Natural killer cell (primary cell): ENCODE measurements at regions of chr1 and their contacts with region 1.

Region 1: GRCh38 chr1:246002725-246003441 is 504.2 kb downstream of the SMYD3 start:
- DNase-seq: peak; percentile 78 to 90
- ATAC-seq: peak; percentile 80 to 85 (median 85)
- H3K4me3 ChIP-seq: no peak overlapping the region
- H3K4me3 Mint-ChIP-seq: no peak overlapping the region
- H3K27ac ChIP-seq: no peak overlapping the region
- H3K27ac Mint-ChIP-seq: peak overlapping the region in 1 of 2 donors; percentile 56
- H3K4me1 ChIP-seq: no peaks in the 10 kb centered on the region
- H3K4me1 Mint-ChIP-seq: peaks cover 0 to 7% of the 10 kb centered on the region in 2 donors
- H3K27me3 ChIP-seq: no peaks in the 10 kb centered on the region
- H3K27me3 Mint-ChIP-seq: no peaks in the 10 kb centered on the region
- CTCF ChIP-seq: peak; percentile 94

Region 2: GRCh38 chr1:245363461-245364200 is 639.3 kb before region 1 on chr1:
- intact Hi-C with region 1: loop called (anchors 5 kb)
- DNase-seq: peak; percentile 14 to 18
- ATAC-seq: peak; percentile 78 to 97 (median 89)
- H3K4me3 ChIP-seq: no peak overlapping the region
- H3K4me3 Mint-ChIP-seq: peak overlapping the region; percentile 71
- H3K27ac ChIP-seq: no peak overlapping the region
- H3K27ac Mint-ChIP-seq: peak overlapping the region; percentile 61 to 83
- H3K4me1 ChIP-seq: peaks cover 21% of the 10 kb centered on the region
- H3K4me1 Mint-ChIP-seq: peaks cover 14 to 19% of the 10 kb centered on the region in 2 donors
- H3K27me3 ChIP-seq: no peaks in the 10 kb centered on the region
- H3K27me3 Mint-ChIP-seq: no peaks in the 10 kb centered on the region
- CTCF ChIP-seq: no peak

Region 3: DNA sequence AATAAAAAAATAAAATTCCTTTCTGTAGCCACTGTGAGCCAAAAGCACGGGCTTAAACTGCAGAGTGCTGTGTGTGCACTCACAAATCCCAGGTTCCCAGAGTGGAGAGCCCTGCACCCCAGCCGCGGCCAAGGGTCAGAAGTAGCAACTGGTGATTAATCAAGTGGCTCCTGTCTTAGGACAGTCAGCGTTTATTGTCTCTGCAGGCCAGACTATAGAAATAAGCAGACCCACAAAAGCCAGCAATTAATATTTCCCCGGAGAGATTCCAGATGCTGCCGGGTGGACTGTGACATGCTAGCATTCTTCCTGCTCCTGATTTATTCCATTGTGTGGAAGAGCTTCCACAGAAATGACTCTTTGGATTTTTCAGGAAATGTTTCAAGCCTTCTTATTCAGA is 435.9 kb before region 1 on chr1:
- intact Hi-C with region 1: loop called (anchors 2 kb)
- DNase-seq: no peak
- ATAC-seq: no peak
- H3K4me3 ChIP-seq: no peak overlapping the region
- H3K4me3 Mint-ChIP-seq: no peak overlapping the region
- H3K27ac ChIP-seq: no peak overlapping the region
- H3K27ac Mint-ChIP-seq: no peak overlapping the region
- H3K4me1 ChIP-seq: no peaks in the 10 kb centered on the region
- H3K4me1 Mint-ChIP-seq: no peaks in the 10 kb centered on the region
- H3K27me3 ChIP-seq: no peaks in the 10 kb centered on the region
- H3K27me3 Mint-ChIP-seq: no peaks in the 10 kb centered on the region
- CTCF ChIP-seq: no peak

Region 4: GRCh38 chr1:245888809-245889208 is 114.1 kb before region 1 on chr1:
- intact Hi-C with region 1: loop called (anchors 1 kb)
- DNase-seq: peak in 1 of 2 donors; percentile 59
- ATAC-seq: peak in 1 of 3 donors; percentile 49
- H3K4me3 ChIP-seq: no peak overlapping the region
- H3K4me3 Mint-ChIP-seq: no peak overlapping the region
- H3K27ac ChIP-seq: no peak overlapping the region
- H3K27ac Mint-ChIP-seq: no peak overlapping the region
- H3K4me1 ChIP-seq: no peaks in the 10 kb centered on the region
- H3K4me1 Mint-ChIP-seq: peaks cover 0 to 6% of the 10 kb centered on the region in 2 donors
- H3K27me3 ChIP-seq: no peaks in the 10 kb centered on the region
- H3K27me3 Mint-ChIP-seq: no peaks in the 10 kb centered on the region
- CTCF ChIP-seq: peak; percentile 49

Region 5: GRCh38 chr1:246032031-246032551 is 29.2 kb after region 1 on chr1:
- intact Hi-C with region 1: no loop called
- DNase-seq: no peak
- ATAC-seq: no peak
- H3K4me3 ChIP-seq: no peak overlapping the region
- H3K4me3 Mint-ChIP-seq: no peak overlapping the region
- H3K27ac ChIP-seq: no peak overlapping the region
- H3K27ac Mint-ChIP-seq: no peak overlapping the region
- H3K4me1 ChIP-seq: no peaks in the 10 kb centered on the region
- H3K4me1 Mint-ChIP-seq: peaks cover 0 to 6% of the 10 kb centered on the region in 2 donors
- H3K27me3 ChIP-seq: no peaks in the 10 kb centered on the region
- H3K27me3 Mint-ChIP-seq: no peaks in the 10 kb centered on the region
- CTCF ChIP-seq: no peak